Left ventricle myocardium superior (tissue), 1 donor: ENCODE measurements at regions of chr13 and their contacts with region 1.

Region 1: DNA sequence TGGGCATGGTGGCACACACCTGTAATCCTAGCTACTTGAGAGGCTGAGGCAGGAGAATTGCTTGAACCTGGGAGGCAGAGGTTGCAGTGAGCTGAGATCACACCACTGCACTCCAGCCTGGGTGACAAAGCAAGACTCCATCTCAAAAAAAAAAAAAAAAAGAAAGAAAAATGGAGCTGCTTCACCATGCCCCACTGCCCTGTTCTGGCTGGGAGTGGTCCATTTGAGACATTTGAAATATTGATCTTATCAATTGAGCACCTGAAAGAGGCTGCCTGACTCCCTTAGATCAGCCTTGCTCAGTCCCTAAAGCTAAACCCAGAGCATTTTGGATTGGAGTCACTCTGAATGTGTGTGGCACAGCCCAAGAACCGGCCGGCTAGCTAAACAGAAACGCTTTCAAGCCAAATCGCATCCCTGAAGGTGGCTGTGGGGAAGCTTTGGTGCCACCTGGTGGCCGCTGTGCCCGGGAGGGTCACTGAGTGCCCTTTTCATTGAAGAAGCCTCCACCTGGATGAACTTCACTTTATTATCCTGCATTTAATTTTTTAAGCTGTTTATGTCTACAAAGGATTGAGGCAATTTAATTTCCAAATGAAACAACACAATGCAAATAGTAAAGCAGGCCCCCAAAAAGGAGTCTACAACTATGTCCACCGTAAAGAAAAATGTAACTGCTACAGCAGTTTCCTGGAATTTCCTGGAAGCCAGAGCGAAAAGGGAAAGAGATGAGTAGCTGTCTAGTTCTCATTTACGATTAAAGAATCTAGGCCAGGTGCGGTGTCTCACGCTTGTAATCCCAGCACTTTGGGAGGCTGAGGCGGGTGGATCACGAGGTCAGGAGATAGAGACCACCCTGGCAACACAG is 53.1 kb upstream of the SERPINE3 start:
- DNase-seq: peak; percentile 90
- ATAC-seq: peak; percentile 69

Region 2: DNA sequence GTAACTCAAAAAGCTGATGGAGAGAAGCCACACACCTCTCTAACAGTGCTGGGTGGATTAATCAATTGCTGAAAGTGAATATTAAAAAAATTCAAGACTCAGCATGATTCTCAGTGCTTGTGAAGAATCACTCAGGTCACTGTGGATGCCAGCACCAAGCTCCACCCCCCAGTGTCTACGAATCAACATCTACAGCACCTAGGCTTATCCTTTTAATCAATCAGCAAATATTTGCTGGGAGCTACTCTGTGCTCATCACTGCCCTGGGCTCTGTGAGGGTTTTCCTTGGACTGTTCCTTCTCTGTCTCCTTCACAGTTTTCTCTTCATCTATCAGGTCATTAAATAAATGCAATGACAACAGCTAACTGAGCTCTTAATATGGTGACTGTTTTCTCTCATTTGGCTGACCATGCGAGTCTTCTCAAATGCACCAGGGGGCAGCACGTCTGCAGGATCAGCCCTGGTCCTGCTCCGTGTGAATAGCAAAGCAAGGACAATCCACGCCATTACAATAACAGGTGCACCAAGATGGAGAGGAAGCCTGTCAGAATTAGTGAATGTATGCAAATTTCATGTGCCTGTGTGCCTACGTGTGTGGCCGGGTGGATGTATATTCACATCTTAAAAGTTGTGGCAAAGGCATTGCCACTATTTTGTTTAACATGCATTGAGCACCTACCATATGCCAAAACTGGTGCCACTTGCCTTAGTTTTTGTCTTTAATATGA is 160.7 kb before region 1 on chr13:
- intact Hi-C with region 1: loop called (anchors 5 kb)
- DNase-seq: peak; percentile 56
- ATAC-seq: peak; percentile 80

Region 3: DNA sequence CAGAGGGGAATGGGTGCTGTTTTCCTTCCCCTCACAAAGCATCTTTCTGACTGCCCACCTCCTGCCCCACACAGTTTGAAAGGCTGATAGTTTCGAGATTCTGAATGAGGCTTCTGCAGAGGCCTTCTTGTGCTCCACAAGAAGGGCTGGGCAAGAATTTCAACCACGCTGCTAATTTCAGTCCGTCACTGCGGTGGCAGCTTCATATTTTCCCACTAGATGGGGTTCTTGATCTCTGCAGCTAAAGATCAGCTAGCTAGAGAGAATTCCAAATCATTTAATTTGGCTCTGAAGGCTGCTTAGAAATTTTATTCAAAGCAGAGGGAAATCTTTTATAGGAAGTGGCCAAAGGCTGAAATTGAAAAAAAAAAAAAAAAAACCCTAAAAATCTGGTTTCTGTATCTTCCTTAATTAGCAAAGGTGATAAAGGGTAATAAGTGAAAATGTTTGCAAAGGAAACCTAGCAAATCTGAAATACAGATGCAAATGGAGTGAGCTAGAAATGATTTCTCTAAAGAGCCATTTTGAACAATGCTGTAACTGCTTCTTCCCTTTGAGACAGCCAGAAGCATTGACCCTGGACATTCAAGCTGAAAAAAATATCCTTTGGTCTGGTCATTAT is 137.3 kb before region 1 on chr13:
- intact Hi-C with region 1: loop called (anchors 1 kb)
- DNase-seq: no peak
- ATAC-seq: peak; percentile 71

Region 4: DNA sequence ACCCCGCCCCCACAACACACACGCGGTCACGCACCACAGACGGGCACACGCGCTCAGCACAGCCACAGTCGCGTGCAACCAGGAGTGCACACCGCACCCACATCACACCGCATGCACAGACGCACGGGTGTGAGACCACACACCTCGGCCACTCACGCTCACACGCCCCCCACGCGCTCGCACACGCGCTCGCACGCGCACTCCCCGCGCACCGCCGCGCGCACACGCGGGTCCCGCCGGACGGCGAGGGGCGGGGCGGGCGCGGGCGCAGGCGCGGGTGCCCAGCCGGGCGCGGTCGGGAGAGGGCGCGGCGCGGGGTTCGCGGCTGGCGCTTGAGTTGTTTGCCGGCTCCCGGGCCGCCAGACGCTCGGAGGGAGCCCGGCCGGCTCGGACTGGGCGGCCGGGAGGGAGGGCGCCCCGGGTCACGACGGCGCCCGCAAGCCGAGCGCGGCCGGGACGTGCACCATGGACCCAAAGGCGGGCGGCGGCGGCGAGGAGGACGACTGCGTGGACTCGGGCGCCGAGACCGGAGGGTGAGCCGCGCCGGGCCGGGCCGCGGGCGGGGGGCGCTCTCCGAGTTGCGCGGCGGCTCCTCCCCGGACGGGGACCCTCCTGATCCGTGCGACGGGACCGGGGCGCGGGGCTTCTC is 64.2 kb before region 1 on chr13 and contains the start of gene FAM124A:
- intact Hi-C with region 1: loop called (anchors 10 kb)
- DNase-seq: peak; percentile 79
- ATAC-seq: peak; percentile 94
- total RNA-seq, gene FAM124A: 14.9 TPM

Region 5: DNA sequence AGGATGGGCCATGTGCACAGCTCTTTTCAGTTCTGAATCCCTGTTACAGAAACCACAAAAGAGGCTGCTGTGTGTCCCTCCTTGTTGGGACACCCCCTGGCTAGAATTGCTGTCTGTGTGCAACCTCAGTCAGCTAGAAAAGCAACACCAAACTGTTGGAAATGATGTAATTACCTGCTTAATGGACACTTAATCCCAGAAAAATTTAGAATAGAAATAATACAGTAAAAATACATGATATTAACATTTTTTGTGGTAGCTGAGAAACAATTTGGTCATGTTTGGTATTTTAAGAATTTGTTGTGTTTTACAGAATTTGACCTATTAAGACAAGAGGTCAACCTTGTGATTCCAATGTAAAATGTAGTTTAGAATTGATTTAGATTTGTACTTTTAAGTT is 17.3 kb before region 1 on chr13:
- intact Hi-C with region 1: no loop called
- DNase-seq: no peak
- ATAC-seq: no peak

Region 6: DNA sequence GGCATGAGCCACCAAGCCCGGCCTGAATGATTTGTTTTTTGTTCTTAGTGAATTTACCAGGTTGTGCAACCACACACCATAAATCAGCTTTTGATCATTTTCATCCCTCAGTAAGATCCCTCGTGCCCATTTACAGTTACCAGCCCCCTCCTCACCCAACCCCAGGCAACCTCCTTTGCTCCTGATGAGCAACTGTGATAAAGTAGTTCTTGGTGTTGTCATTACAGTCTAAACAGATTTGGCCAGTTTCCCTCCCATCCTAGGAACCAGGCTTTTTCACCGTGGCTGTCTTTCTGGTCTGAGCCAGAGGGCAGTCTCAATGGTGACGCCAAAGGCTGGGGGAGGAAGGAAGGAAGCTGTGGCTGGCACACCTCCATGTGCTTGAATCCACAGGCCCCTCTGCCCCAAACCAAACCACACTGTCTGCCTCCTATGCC is 236.7 kb after region 1 on chr13:
- intact Hi-C with region 1: no loop called
- DNase-seq: no peak
- ATAC-seq: no peak